ENCODE measurements at regions of chr7 and their contacts with region 1.

Region 1: DNA sequence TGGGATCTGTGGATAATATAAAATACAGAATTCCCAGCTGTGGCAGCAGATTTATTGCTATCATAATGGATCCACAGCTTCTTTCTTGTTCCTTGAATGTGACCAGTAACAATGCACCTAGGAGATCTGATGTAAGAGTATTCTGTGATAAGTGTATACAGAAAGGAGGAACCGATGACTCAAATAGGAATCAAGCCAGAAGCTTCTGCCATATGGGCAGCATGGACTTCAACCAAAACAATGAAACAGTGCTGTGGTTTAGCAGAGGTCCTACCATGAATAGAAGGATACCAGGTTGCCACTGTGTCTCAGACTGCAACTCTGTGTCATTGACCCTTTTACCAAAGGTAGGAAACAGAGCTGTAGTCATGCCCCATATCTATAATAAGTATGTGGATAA is 81.8 kb downstream of the PTPRZ1 start:
- DNase-seq: no peak
- H3K4me3 ChIP-seq: no peak overlapping the region
- H3K27ac ChIP-seq: no peak overlapping the region
- H3K4me1 ChIP-seq: peaks cover 0 to 16% (median 5%) of the 10 kb centered on the region in 4 experiments; a peak in 4 of 7 replicates
- H3K27me3 ChIP-seq: no peaks in the 10 kb centered on the region
- CTCF ChIP-seq: no peak
- EP300 ChIP-seq: no peak
- POLR2A ChIP-seq: no peak
- RAD21 ChIP-seq: no peak

Region 2: GRCh38 chr7:121774563-121774962 is 180.2 kb before region 1 on chr7:
- CTCF ChIA-PET with region 1: no interaction called
- POLR2A ChIA-PET with region 1: no interaction called
- DNase-seq: no peak
- H3K4me3 ChIP-seq: no peak overlapping the region
- H3K27ac ChIP-seq: no peak overlapping the region
- H3K4me1 ChIP-seq: peaks cover 0 to 5% (median 2%) of the 10 kb centered on the region in 4 experiments; a peak in 4 of 7 replicates
- H3K27me3 ChIP-seq: no peaks in the 10 kb centered on the region
- CTCF ChIP-seq: no peak
- EP300 ChIP-seq: no peak
- POLR2A ChIP-seq: no peak
- RAD21 ChIP-seq: no peak

Region 3: GRCh38 chr7:121936951-121937623 is 17.7 kb before region 1 on chr7:
- CTCF ChIA-PET with region 1: interaction called, 7 read pairs
- POLR2A ChIA-PET with region 1: interaction called, 35 read pairs
- DNase-seq: peak in 1 of 2 experiments; percentile 33
- H3K4me3 ChIP-seq: peak overlapping the region in 1 of 4 experiments; percentile 37; a peak in 1 of 8 replicates
- H3K27ac ChIP-seq: peak overlapping the region; percentile 88
- H3K4me1 ChIP-seq: peaks cover 10 to 46% (median 29%) of the 10 kb centered on the region in 4 experiments; a peak in 6 of 7 replicates
- H3K27me3 ChIP-seq: no peaks in the 10 kb centered on the region
- CTCF ChIP-seq: no peak
- EP300 ChIP-seq: 0 out of 3 replicates have a peak, but pooled peaks of 1 of the 2 experiments have one; percentile 37
- POLR2A ChIP-seq: peak in 1 of 2 experiments; percentile 44; a peak in 2 of 3 replicates
- RAD21 ChIP-seq: no peak; a peak in 1 of 4 replicates

Region 4: GRCh38 chr7:122350701-122351100 is 395.9 kb after region 1 on chr7:
- CTCF ChIA-PET with region 1: no interaction called
- POLR2A ChIA-PET with region 1: no interaction called
- DNase-seq: no peak
- H3K4me3 ChIP-seq: no peak overlapping the region
- H3K27ac ChIP-seq: no peak overlapping the region
- H3K4me1 ChIP-seq: peaks cover 0 to 5% (median 2%) of the 10 kb centered on the region in 4 experiments; a peak in 2 of 7 replicates
- H3K27me3 ChIP-seq: no peaks in the 10 kb centered on the region
- CTCF ChIP-seq: peak in 1 of 3 experiments; percentile 11; a peak in 1 of 4 replicates
- EP300 ChIP-seq: no peak
- POLR2A ChIP-seq: no peak
- RAD21 ChIP-seq: peak in 1 of 2 experiments; percentile 37; a peak in 3 of 4 replicates

Measured in H1 (cell line).